ENCODE measurements at regions of chr19 and their contacts with region 1.

Region 1: DNA sequence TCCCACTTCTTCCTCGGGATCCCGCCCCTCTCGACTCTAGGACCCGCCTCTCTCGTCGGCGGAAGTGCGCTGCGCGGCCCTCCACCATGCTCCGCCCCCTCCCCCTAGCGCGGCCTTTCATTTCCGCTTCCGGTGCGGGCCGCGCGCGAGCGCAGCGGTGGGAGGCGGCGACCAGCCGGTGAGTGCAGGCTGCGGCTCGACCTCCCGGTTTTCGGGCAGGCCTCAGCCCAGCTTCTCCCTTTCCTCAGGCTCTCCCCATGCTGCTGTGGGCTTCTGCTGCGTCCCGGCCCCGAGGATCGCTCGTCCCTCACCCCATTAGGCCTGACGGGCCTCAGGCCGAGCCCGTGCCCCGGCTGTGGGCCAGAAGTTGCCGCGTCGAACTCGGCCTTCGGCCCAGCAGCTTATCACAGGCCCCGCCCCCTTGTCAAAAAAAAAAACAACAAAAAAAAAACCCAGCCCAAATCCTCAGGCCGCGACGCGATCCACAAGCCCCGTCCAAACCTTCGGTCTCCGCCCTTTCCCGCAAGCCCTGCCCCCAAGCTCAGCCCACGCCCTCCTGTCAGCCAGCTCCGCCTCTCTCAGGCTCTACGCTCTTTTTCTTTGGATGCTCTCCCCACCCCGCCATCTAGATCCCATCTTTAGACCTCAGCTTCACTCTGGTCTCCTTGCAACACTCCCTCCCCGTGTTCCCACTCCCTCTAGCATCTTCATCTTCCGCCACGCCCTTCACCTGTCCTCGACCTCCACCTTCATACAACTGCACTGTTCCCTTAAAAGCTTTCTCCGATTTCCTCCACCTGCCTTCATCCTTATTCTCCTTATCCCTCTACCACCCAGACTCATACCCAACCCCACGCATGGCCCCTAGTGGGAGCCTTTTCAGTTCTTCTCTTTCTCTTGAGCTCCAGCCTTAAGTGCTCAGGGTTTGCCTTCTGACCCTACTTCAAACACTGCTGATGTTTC is at the start of gene CLASRP:
- DNase-seq: peak; percentile 93 to 94 (median 94)
- ATAC-seq: peak; percentile 95 to 99 (median 98)
- H3K4me3 ChIP-seq: peak within 1 kb of the TSS; percentile 73 to 99 (median 91)
- H3K27ac ChIP-seq: peak within 1 kb of the TSS; percentile 90 to 97 (median 96)
- H3K4me1 ChIP-seq: peaks cover 6 to 40% (median 31%) of the 10 kb centered on the region in 12 donors
- H3K27me3 ChIP-seq: no peaks in the 10 kb centered on the region
- CTCF ChIP-seq: no peak
- POLR2A ChIP-seq: peak in 1 of 2 donors; percentile 88
- total RNA-seq, gene CLASRP: 26.0 to 68.2 (median 32.4) TPM

Region 2: DNA sequence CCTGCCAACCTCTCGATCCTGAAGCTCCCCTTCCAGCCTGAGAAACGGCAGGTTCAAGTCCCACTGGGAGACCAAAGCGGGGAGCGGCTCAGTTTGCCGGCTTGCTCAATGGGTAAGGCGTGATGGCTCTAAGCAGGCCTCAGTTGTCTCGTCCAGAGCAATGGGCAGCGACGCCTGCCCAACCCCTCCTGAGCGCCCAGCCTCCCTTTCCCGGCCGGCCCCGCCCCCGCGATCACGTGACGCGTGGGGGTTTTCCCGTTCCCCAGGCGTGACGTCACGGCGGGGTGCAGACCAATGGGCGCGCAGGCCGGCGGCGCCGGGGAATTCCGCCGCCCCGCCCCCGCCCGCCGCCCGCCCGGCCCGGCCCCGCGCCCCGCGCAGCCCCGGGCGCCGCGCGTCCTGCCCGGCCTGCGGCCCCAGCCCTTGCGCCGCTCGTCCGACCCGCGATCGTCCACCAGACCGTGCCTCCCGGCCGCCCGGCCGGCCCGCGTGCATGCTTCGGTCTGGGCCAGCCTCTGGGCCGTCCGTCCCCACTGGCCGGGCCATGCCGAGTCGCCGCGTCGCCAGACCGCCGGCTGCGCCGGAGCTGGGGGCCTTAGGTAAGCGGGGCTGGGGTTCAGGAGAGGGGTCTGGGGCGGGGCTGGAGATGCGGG is 38.0 kb before region 1 on chr19 and contains the start of gene RELB:
- intact Hi-C with region 1: loop called in 2 of 10 experiments (anchors 2 kb)
- DNase-seq: peak; percentile 96 to 98 (median 97)
- ATAC-seq: peak; percentile 28 to 71 (median 62)
- H3K4me3 ChIP-seq: peak within 1 kb of the TSS; percentile 52 to 95 (median 88)
- H3K27ac ChIP-seq: peak within 1 kb of the TSS; percentile 88 to 100 (median 98)
- H3K4me1 ChIP-seq: peaks cover 0 to 14% (median 10%) of the 10 kb centered on the region in 12 donors
- H3K27me3 ChIP-seq: no peaks in the 10 kb centered on the region
- CTCF ChIP-seq: no peak
- POLR2A ChIP-seq: no peak
- total RNA-seq, gene RELB: 2.8 to 23.2 (median 6.7) TPM

Region 3: GRCh38 chr19:45079063-45079910 is 40.1 kb after region 1 on chr19 and contains the start of gene GEMIN7:
- intact Hi-C with region 1: loop called in 1 of 10 experiments (anchors 5 kb)
- DNase-seq: peak; percentile 73 to 86 (median 81)
- ATAC-seq: peak; percentile 77 to 89 (median 87)
- H3K4me3 ChIP-seq: peak within 1 kb of the TSS; percentile 81 to 100 (median 94)
- H3K27ac ChIP-seq: peak within 1 kb of the TSS; percentile 60 to 87 (median 74)
- H3K4me1 ChIP-seq: peaks cover 6 to 47% (median 28%) of the 10 kb centered on the region in 12 donors
- H3K27me3 ChIP-seq: no peaks in the 10 kb centered on the region
- CTCF ChIP-seq: peak in 3 of 12 donors; percentile 12 to 21 (median 16)
- POLR2A ChIP-seq: peak in 1 of 2 donors; percentile 63
- total RNA-seq, gene GEMIN7: 11.4 to 22.0 (median 17.0) TPM

Measured in heart left ventricle (tissue), 16 donors.